ENCODE measurements at regions of chr9 and their contacts with region 1.

Region 1: GRCh38 chr9:75123696-75124095 is 35.4 kb downstream of the OSTF1 start:
- DNase-seq: no peak
- ATAC-seq: no peak
- H3K4me3 ChIP-seq: no peak overlapping the region
- H3K4me3 Mint-ChIP-seq: no peak overlapping the region
- H3K27ac ChIP-seq: no peak overlapping the region
- H3K27ac Mint-ChIP-seq: peak overlapping the region in 4 of 9 donors; percentile 17 to 50 (median 31)
- H3K4me1 ChIP-seq: peaks cover 0 to 18% of the 10 kb centered on the region in 2 donors
- H3K4me1 Mint-ChIP-seq: peaks cover 20 to 73% (median 38%) of the 10 kb centered on the region in 7 donors
- H3K27me3 ChIP-seq: no peaks in the 10 kb centered on the region
- H3K27me3 Mint-ChIP-seq: no peaks in the 10 kb centered on the region

Region 2: GRCh38 chr9:74645007-74645639 is 478.6 kb before region 1 on chr9:
- CTCF ChIA-PET with region 1: no interaction called
- POLR2A ChIA-PET with region 1: no interaction called
- intact Hi-C with region 1: no loop called
- DNase-seq: no peak
- ATAC-seq: no peak
- H3K4me3 ChIP-seq: no peak overlapping the region
- H3K4me3 Mint-ChIP-seq: no peak overlapping the region
- H3K27ac ChIP-seq: no peak overlapping the region
- H3K27ac Mint-ChIP-seq: no peak overlapping the region
- H3K4me1 ChIP-seq: no peaks in the 10 kb centered on the region
- H3K4me1 Mint-ChIP-seq: no peaks in the 10 kb centered on the region
- H3K27me3 ChIP-seq: no peaks in the 10 kb centered on the region
- H3K27me3 Mint-ChIP-seq: peaks cover 0 to 20% (median 4%) of the 10 kb centered on the region in 5 donors

Region 3: DNA sequence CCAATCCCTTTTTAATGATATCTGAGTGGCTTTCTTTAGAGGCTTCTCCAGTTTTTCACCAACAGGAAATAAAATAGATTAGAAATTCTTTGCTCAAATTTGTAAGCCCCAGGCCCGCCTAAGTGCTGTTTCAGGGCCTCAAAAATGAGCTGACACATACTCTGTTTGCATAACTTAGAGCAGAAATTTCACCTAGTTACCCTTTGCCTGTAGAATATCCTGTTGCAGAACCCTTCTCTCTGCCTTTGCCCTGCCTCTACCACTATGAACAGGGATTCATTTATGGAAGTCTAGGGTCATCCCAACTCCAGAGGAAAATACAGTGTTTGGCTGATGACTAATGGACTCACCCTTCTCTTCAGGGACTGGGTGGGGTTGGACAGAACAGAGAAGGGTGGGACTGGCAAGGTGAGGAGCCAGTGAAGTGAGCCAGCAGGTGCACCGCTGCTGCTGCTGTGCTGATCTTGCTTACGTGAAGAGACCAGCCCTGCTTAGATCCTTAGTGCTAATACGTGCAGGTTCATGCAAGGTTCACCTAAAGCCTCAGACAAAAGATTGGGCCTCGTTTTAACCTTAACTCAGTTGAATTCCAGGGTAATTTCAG is 12.6 kb before region 1 on chr9:
- CTCF ChIA-PET with region 1: interaction called, 4 read pairs
- POLR2A ChIA-PET with region 1: no interaction called
- intact Hi-C with region 1: loop called in 1 of 2 experiments (anchors 2 kb)
- DNase-seq: peak in 1 of 9 donors; percentile 2
- ATAC-seq: peak; percentile 49
- H3K4me3 ChIP-seq: no peak overlapping the region
- H3K4me3 Mint-ChIP-seq: peak overlapping the region in 3 of 10 donors; percentile 23 to 36 (median 27)
- H3K27ac ChIP-seq: no peak overlapping the region
- H3K27ac Mint-ChIP-seq: peak overlapping the region in 3 of 9 donors; percentile 15 to 53 (median 24)
- H3K4me1 ChIP-seq: peaks cover 0 to 3% of the 10 kb centered on the region in 2 donors
- H3K4me1 Mint-ChIP-seq: peaks cover 28 to 73% (median 70%) of the 10 kb centered on the region in 7 donors
- H3K27me3 ChIP-seq: no peaks in the 10 kb centered on the region
- H3K27me3 Mint-ChIP-seq: no peaks in the 10 kb centered on the region

Region 4: GRCh38 chr9:75142202-75142601 is 18.5 kb after region 1 on chr9:
- CTCF ChIA-PET with region 1: interaction called, 3 read pairs
- POLR2A ChIA-PET with region 1: interaction called, 3 read pairs
- intact Hi-C with region 1: loop called in 1 of 2 experiments (anchors 2 kb)
- DNase-seq: no peak
- ATAC-seq: peak; percentile 82
- H3K4me3 ChIP-seq: peak overlapping the region; percentile 3
- H3K4me3 Mint-ChIP-seq: peak overlapping the region; percentile 7 to 74 (median 60)
- H3K27ac ChIP-seq: no peak overlapping the region
- H3K27ac Mint-ChIP-seq: peak overlapping the region; percentile 2 to 89 (median 79)
- H3K4me1 ChIP-seq: peaks cover 47 to 53% of the 10 kb centered on the region in 2 donors
- H3K4me1 Mint-ChIP-seq: peaks cover 21 to 97% (median 78%) of the 10 kb centered on the region in 7 donors
- H3K27me3 ChIP-seq: no peaks in the 10 kb centered on the region
- H3K27me3 Mint-ChIP-seq: no peaks in the 10 kb centered on the region

Region 5: DNA sequence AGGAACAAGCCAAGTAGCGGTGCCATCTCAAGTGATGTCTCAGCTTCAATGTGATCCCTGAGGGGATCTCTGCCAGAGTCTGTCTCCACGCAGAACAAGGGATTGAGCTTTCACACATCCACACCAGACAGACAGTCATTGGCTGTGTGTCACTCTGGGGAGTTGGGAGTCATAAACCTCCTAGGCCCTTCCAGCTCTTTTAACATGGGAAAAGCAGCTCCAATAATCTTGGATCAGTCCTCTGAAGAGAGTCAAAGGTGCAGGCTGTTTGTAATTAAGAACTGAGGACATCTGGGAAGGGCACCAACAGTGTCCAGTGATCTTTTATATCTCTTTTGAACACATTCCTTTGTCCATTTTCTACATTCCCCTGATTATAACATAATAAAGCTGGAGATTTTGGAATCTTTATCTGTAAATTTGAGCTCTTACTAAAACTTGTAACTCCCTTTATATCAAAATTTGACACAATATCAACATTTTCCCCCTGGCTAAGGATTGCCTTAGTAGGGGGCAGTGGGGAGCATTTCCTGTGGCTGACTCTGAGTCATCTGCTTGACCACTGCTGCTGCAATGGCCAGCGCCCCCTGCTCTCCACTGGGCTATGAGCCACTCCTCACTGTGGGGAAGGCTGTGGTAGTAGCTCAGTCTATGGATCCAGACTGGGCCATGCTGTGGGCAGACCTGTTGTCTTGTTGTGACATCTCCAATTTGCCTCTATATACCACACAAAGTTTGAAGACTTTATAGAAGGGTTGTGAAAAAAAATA is 249.0 kb after region 1 on chr9:
- CTCF ChIA-PET with region 1: no interaction called
- POLR2A ChIA-PET with region 1: no interaction called
- intact Hi-C with region 1: no loop called
- DNase-seq: no peak
- ATAC-seq: no peak
- H3K4me3 ChIP-seq: no peak overlapping the region
- H3K4me3 Mint-ChIP-seq: no peak overlapping the region
- H3K27ac ChIP-seq: no peak overlapping the region
- H3K27ac Mint-ChIP-seq: no peak overlapping the region
- H3K4me1 ChIP-seq: no peaks in the 10 kb centered on the region
- H3K4me1 Mint-ChIP-seq: no peaks in the 10 kb centered on the region
- H3K27me3 ChIP-seq: no peaks in the 10 kb centered on the region
- H3K27me3 Mint-ChIP-seq: peaks cover 0 to 4% (median 3%) of the 10 kb centered on the region in 5 donors

Measured in naive thymus-derived CD4-positive, alpha-beta T cell (primary cell).